A549 (cell line): ENCODE measurements at regions of chr12 and their contacts with region 1.

Region 1: GRCh38 chr12:71780237-71780822 is 25.7 kb downstream of the RAB21 start:
- DNase-seq: peak; percentile 28 to 49
- ATAC-seq: peak; percentile 59 to 75; a peak in 5 of 6 replicates
- H3K4me3 ChIP-seq: no peak overlapping the region
- H3K27ac ChIP-seq: no peak overlapping the region
- H3K4me1 ChIP-seq: no peaks in the 10 kb centered on the region
- CTCF ChIP-seq: peak; percentile 85
- EP300 ChIP-seq: no peak
- POLR2A ChIP-seq: no peak
- RAD21 ChIP-seq: peak; percentile 69 to 74

Region 2: GRCh38 chr12:71754461-71755145 is 25.7 kb before region 1 on chr12 and contains the start of gene RAB21:
- CTCF ChIA-PET with region 1: interaction called, 10 read pairs
- POLR2A ChIA-PET with region 1: interaction called, 3 read pairs
- DNase-seq: peak; percentile 92 to 98
- ATAC-seq: peak; percentile 94 to 99
- H3K4me3 ChIP-seq: peak within 1 kb of the TSS; percentile 65
- H3K27ac ChIP-seq: peak within 1 kb of the TSS; percentile 87 to 89
- H3K4me1 ChIP-seq: peaks cover 9% of the 10 kb centered on the region; the same call in 1 of the 3 replicates
- CTCF ChIP-seq: no peak
- EP300 ChIP-seq: no peak
- POLR2A ChIP-seq: peak; percentile 90
- RAD21 ChIP-seq: no peak; a peak in 1 of 5 replicates
- polyA plus RNA-seq, gene RAB21: 23.8 and 33.3 TPM in 2 replicates

Region 3: GRCh38 chr12:71791473-71792150 is 11.3 kb after region 1 on chr12:
- CTCF ChIA-PET with region 1: interaction called, 21 read pairs
- POLR2A ChIA-PET with region 1: no interaction called
- DNase-seq: no peak
- ATAC-seq: no peak
- H3K4me3 ChIP-seq: no peak overlapping the region
- H3K27ac ChIP-seq: no peak overlapping the region
- H3K4me1 ChIP-seq: no peaks in the 10 kb centered on the region
- CTCF ChIP-seq: no peak
- EP300 ChIP-seq: no peak
- POLR2A ChIP-seq: no peak
- RAD21 ChIP-seq: no peak

Region 4: GRCh38 chr12:71840231-71840847 is 60.0 kb after region 1 on chr12:
- CTCF ChIA-PET with region 1: interaction called, 30 read pairs
- POLR2A ChIA-PET with region 1: no interaction called
- DNase-seq: peak; percentile 39 to 49
- ATAC-seq: peak; percentile 43 to 45; a peak in 4 of 6 replicates
- H3K4me3 ChIP-seq: peak overlapping the region; percentile 76
- H3K27ac ChIP-seq: peak overlapping the region; percentile 78 to 88
- H3K4me1 ChIP-seq: peaks cover 6% of the 10 kb centered on the region; the same call in 1 of the 3 replicates
- CTCF ChIP-seq: no peak
- EP300 ChIP-seq: no peak
- POLR2A ChIP-seq: no peak
- RAD21 ChIP-seq: no peak

Region 5: DNA sequence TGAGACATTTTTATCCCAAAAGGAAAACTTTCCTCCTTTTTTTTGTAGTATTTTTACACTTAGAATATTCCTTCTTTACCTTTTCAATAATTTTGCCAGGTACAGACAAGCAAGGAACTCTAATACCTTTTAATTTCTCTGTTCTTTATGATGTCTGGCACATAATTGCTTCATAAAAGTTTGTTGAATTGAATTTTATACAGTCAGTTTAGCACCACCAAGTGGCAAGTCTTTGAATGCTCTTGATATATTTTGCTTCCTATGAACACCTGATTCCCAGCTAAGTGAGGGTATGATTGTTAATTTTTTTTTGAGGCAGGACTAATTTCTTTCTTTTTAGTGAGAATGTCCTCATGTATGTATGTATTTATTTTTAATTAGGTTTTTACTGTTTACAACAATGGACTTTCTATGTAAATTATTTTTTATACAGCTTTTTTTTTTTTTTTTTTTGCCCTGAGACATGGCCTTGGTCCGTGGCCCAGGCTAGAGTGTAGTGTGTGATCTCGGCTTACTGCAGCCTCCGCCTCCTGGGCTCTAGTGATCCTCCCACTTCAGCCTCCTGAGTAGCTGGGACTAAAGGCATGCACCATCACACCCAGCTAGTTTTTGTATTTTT is 66.1 kb after region 1 on chr12:
- CTCF ChIA-PET with region 1: interaction called, 30 read pairs
- POLR2A ChIA-PET with region 1: no interaction called
- DNase-seq: peak in 1 of 2 experiments; percentile 49
- ATAC-seq: peak; percentile 66 to 78; a peak in 4 of 6 replicates
- H3K4me3 ChIP-seq: no peak overlapping the region
- H3K27ac ChIP-seq: no peak overlapping the region
- H3K4me1 ChIP-seq: 0 out of 3 replicates have a peak, but pooled peaks cover 3% of the 10 kb centered on the region
- CTCF ChIP-seq: peak; percentile 65
- EP300 ChIP-seq: no peak
- POLR2A ChIP-seq: no peak
- RAD21 ChIP-seq: peak; percentile 36 to 44; a peak in 4 of 5 replicates

Region 6: GRCh38 chr12:72098622-72099021 is 318.3 kb after region 1 on chr12:
- CTCF ChIA-PET with region 1: no interaction called
- POLR2A ChIA-PET with region 1: no interaction called
- DNase-seq: peak in 1 of 2 experiments; percentile 6
- ATAC-seq: no peak
- H3K4me3 ChIP-seq: no peak overlapping the region
- H3K27ac ChIP-seq: no peak overlapping the region
- H3K4me1 ChIP-seq: no peaks in the 10 kb centered on the region
- CTCF ChIP-seq: no peak
- EP300 ChIP-seq: no peak
- POLR2A ChIP-seq: no peak
- RAD21 ChIP-seq: no peak